Right lobe of liver (tissue), 6 donors: ENCODE measurements at regions of chr3 and their contacts with region 1.

Region 1: DNA sequence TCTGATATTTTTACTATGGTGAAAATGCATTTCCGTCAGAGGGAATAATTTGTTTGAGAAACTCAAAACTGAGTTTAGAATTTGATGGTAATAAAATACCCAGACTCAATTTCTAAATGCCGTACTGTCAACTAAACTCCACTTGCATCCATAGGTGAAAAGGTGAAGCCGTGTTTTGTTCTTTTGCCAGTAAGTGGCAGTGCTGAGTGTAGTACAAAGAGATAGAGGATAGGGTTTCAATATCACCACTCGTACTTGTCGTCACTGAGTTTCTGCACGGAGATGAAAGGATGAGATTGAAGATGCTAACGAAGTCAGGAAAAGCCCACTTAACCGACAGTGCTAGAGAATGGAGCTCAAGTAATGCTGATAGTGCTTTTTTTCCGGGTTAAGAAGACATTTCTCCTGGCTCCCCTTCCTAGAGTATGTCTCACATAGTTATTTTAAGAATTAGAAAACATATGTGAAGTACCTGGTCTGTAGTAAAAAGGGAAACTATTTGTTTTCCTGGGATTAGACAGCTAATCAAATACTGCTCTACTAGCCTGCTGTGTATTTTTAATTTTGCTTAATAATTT is 345.1 kb downstream of the IL5RA start:
- DNase-seq: peak in 1 of 3 donors; percentile 55
- ATAC-seq: peak; percentile 88 to 99 (median 94)
- H3K4me3 ChIP-seq: no peak overlapping the region
- H3K27ac ChIP-seq: no peak overlapping the region
- H3K4me1 ChIP-seq: no peaks in the 10 kb centered on the region
- H3K27me3 ChIP-seq: no peaks in the 10 kb centered on the region
- CTCF ChIP-seq: peak; percentile 36 to 58 (median 56)
- POLR2A ChIP-seq: no peak

Region 2: GRCh38 chr3:2915826-2916225 is 150.7 kb after region 1 on chr3:
- intact Hi-C with region 1: loop called in 1 of 2 experiments (anchors 10 kb)
- DNase-seq: no peak
- ATAC-seq: peak in 2 of 4 donors; percentile 74 to 97
- H3K4me3 ChIP-seq: no peak overlapping the region
- H3K27ac ChIP-seq: no peak overlapping the region
- H3K4me1 ChIP-seq: no peaks in the 10 kb centered on the region
- H3K27me3 ChIP-seq: no peaks in the 10 kb centered on the region
- CTCF ChIP-seq: no peak
- POLR2A ChIP-seq: no peak